Gastrocnemius medialis (tissue), 4 donors: ENCODE measurements at regions of chr17 and their contacts with region 1.

Region 1: DNA sequence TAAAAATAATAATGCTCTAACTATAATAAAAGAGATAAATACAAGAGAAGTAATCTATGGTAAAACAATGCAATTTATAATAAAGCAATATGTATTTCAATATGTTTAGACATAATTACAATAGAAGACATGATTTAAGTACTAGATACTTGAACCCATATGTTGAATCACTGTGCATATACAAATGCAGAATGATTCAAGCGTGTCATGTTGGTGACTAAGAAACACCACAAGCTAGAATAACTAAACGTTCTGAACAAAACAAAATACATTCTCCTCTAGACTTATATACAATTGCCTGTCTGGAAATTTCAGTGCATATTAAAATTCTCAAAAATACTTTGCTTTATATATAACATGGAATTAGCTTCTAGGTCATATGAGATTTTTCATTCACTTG is 11.2 kb downstream of the TADA2A start:
- DNase-seq: no peak
- ATAC-seq: no peak
- H3K4me3 ChIP-seq: no peak overlapping the region
- H3K27ac ChIP-seq: no peak overlapping the region
- H3K4me1 ChIP-seq: no peaks in the 10 kb centered on the region
- H3K27me3 ChIP-seq: no peaks in the 10 kb centered on the region
- CTCF ChIP-seq: no peak
- POLR2A ChIP-seq: no peak

Region 2: DNA sequence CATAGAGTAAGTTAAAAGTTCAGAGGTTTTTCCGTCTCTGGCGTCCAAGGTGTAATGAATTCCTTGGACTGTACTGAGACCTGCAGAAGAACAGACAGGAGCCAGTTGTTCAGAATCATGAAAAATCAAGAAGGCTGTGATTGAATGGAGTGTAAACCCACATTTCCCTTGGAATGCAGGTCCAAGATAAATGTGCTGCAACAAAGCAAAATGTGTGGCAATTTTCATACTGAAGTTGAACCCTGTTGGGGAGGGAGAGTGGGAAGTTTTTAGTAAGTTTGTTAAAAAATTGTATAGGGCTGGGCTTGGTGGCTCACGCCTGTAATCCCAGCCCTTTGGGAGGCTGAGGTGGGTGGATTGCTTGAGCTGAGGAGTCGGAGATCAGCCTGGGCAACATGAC is 851.8 kb before region 1 on chr17:
- in situ Hi-C with region 1: no loop called
- intact Hi-C with region 1: loop called (anchors 5 kb)
- DNase-seq: no peak
- ATAC-seq: no peak
- H3K4me3 ChIP-seq: no peak overlapping the region
- H3K27ac ChIP-seq: no peak overlapping the region
- H3K4me1 ChIP-seq: no peaks in the 10 kb centered on the region
- H3K27me3 ChIP-seq: no peaks in the 10 kb centered on the region
- CTCF ChIP-seq: no peak
- POLR2A ChIP-seq: no peak

Region 3: GRCh38 chr17:36837195-36837938 is 580.5 kb before region 1 on chr17:
- in situ Hi-C with region 1: no loop called
- intact Hi-C with region 1: no loop called
- DNase-seq: no peak
- ATAC-seq: no peak
- H3K4me3 ChIP-seq: no peak overlapping the region
- H3K27ac ChIP-seq: no peak overlapping the region
- H3K4me1 ChIP-seq: no peaks in the 10 kb centered on the region
- H3K27me3 ChIP-seq: peaks cover 0 to 4% (median 0%) of the 10 kb centered on the region in 3 donors
- CTCF ChIP-seq: no peak
- POLR2A ChIP-seq: no peak

Region 4: DNA sequence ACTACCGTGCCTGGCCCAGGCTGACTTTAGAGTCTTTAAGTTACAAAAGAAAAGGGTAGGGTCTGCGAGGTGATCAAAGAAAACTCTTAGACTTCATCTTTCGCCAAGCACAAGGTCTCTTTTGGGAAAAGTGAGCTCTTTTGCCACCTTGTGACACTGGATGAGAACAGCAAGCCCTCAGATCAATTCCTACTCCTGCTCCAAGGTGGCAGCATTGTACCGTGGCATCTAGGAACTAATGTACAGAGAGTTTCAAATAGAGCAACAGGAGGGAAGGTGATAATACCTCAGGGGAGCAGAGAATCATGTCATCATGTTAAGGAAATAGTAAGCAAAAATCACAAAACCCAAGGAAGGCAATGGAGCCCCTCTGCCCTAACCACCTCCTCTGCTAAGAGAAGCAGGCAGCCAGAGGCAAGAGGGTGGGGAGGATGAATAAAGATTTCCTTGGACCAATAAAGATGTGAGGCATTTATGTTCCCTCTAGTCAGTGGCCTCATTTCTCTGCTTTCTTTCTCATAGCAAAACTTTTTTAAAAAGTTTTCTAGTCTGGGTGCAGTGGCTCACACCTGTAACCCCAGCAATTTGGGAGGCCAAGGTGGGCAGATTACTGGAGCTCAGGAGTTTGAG is 44.2 kb before region 1 on chr17:
- in situ Hi-C with region 1: no loop called
- intact Hi-C with region 1: no loop called
- DNase-seq: peak; percentile 36 to 57
- ATAC-seq: peak; percentile 95 to 97
- H3K4me3 ChIP-seq: no peak overlapping the region
- H3K27ac ChIP-seq: no peak overlapping the region
- H3K4me1 ChIP-seq: no peaks in the 10 kb centered on the region
- H3K27me3 ChIP-seq: no peaks in the 10 kb centered on the region
- CTCF ChIP-seq: peak; percentile 77 to 96 (median 88)
- POLR2A ChIP-seq: no peak